ENCODE measurements at regions of chr5 and their contacts with region 1.

Region 1: DNA sequence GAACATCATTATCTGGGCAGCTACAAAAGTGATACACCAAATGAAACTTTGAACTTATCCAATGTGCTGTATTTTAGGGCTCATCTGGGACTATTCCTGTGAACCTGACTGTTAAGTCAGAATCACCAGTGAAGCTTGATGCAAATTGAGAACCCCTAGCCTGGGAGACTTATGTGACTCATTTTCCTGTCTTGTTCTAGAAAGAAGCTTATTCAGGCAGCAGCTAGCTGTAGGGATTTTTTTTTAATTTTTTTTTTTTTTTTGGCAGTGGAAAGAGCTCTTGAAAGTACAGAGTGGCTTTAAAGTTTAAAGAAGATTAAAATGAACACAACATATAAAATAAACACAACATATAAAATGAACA is 81.1 kb upstream of the TNFAIP8 start:
- DNase-seq: no peak
- H3K4me3 Mint-ChIP-seq: peak overlapping the region; percentile 52
- H3K27ac Mint-ChIP-seq: peak overlapping the region; percentile 92
- H3K4me1 Mint-ChIP-seq: peaks cover 88% of the 10 kb centered on the region
- H3K27me3 Mint-ChIP-seq: no peaks in the 10 kb centered on the region

Region 2: DNA sequence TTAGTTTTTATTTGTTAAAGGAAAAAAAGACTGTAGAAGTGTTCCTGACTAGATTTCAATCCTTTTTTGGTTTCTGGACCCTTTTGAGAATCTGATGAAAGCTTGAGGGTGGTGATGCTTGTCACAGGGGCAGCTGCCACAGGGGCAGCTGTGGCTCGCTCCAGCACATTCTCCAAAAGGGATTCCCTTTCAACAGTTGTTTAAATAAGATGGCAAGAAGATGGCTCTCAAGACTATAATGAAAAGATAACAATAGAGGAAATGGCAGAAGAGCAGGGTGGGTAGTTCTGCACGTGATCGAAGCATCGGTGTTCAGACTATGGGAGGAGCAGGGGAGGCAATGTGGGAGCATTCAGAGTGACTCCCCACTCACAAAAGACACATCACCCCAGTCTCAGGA is 34.6 kb after region 1 on chr5:
- intact Hi-C with region 1: loop called (anchors 2 kb)
- DNase-seq: no peak
- H3K4me3 Mint-ChIP-seq: peak overlapping the region; percentile 67
- H3K27ac Mint-ChIP-seq: peak overlapping the region; percentile 96
- H3K4me1 Mint-ChIP-seq: peaks cover 88% of the 10 kb centered on the region
- H3K27me3 Mint-ChIP-seq: no peaks in the 10 kb centered on the region